ENCODE measurements at regions of chr5 and their contacts with region 1.

Region 1: GRCh38 chr5:74865804-74866595 is at the start of gene FAM169A:
- DNase-seq: peak in 33 of 35 experiments; percentile 20 to 71 (median 47)
- ATAC-seq: peak; percentile 77 to 83 (median 80)
- H3K4me3 ChIP-seq: peak within 1 kb of the TSS; percentile 69 to 90
- H3K4me3 Mint-ChIP-seq: peak within 1 kb of the TSS; percentile 91 to 96 (median 93)
- H3K27ac ChIP-seq: peak within 1 kb of the TSS; percentile 53
- H3K27ac Mint-ChIP-seq: peak within 1 kb of the TSS; percentile 86
- H3K4me1 ChIP-seq: peaks cover 2 to 16% of the 10 kb centered on the region in 2 experiments
- H3K4me1 Mint-ChIP-seq: peaks cover 40 to 43% (median 41%) of the 10 kb centered on the region in 3 donors
- H3K27me3 ChIP-seq: peaks cover 0 to 14% of the 10 kb centered on the region in 2 experiments
- H3K27me3 Mint-ChIP-seq: peaks cover 0 to 13% of the 10 kb centered on the region in 2 donors
- total RNA-seq, gene FAM169A: 12.5 to 15.9 (median 12.6) TPM

Region 2: GRCh38 chr5:74810915-74811314 is 55.1 kb before region 1 on chr5:
- CTCF ChIA-PET with region 1: no interaction called
- POLR2A ChIA-PET with region 1: interaction called in 1 of 2 experiments, 16 read pairs
- DNase-seq: no peak
- ATAC-seq: no peak
- H3K4me3 ChIP-seq: no peak overlapping the region
- H3K4me3 Mint-ChIP-seq: no peak overlapping the region
- H3K27ac ChIP-seq: no peak overlapping the region
- H3K27ac Mint-ChIP-seq: no peak overlapping the region
- H3K4me1 ChIP-seq: no peaks in the 10 kb centered on the region
- H3K4me1 Mint-ChIP-seq: no peaks in the 10 kb centered on the region
- H3K27me3 ChIP-seq: no peaks in the 10 kb centered on the region
- H3K27me3 Mint-ChIP-seq: no peaks in the 10 kb centered on the region

Region 3: DNA sequence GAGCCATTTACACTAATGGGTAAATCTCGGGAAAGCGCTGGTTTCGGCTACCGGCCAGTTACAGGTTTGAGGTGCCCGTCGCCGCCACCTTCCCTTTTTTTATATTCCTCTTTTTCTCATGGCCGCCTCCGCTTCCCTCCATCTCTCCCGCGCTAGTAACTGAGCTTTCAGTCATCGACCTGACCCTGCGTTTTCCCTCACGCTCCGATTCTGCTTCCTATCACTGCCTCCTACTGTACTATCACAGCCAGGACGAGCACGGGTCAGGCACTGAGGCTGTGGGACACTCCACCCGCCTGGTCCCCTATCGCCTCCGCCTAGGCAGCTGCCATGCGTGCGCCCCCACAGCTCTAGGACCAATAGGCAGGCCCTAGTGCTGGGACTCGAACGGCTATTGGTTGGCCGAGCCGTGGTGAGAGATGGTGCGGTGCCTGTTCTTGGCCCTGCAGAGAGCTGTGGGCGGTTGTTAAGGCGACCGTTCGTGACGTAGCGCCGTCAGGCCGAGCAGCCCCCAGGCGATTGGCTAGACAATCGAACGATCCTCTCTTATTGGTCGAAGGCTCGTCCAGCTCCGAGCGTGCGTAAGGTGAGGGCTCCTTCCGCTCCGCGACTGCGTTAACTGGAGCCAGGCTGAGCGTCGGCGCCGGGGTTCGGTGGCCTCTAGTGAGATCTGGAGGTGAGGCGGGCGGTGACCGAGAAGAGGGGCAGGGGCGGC is 470.8 kb after region 1 on chr5 and contains the start of gene HMGCR:
- CTCF ChIA-PET with region 1: no interaction called
- POLR2A ChIA-PET with region 1: interaction called in 1 of 2 experiments, 10 read pairs
- DNase-seq: peak; percentile 86 to 99 (median 96)
- ATAC-seq: peak; percentile 94 to 97 (median 96)
- H3K4me3 ChIP-seq: peak within 1 kb of the TSS; percentile 80 to 97
- H3K4me3 Mint-ChIP-seq: no peak within 1 kb of the TSS
- H3K27ac ChIP-seq: peak within 1 kb of the TSS; percentile 83
- H3K27ac Mint-ChIP-seq: peak within 1 kb of the TSS in 1 of 2 donors; percentile 74
- H3K4me1 ChIP-seq: peaks cover 14 to 15% of the 10 kb centered on the region in 2 experiments
- H3K4me1 Mint-ChIP-seq: peaks cover 35 to 36% (median 36%) of the 10 kb centered on the region in 3 donors
- H3K27me3 ChIP-seq: no peaks in the 10 kb centered on the region
- H3K27me3 Mint-ChIP-seq: no peaks in the 10 kb centered on the region
- total RNA-seq, gene HMGCR: 29.6 to 47.2 (median 41.6) TPM

Region 4: GRCh38 chr5:76513486-76513885 is 1647.5 kb after region 1 on chr5:
- CTCF ChIA-PET with region 1: no interaction called
- POLR2A ChIA-PET with region 1: no interaction called
- DNase-seq: no peak
- ATAC-seq: no peak
- H3K4me3 ChIP-seq: no peak overlapping the region
- H3K4me3 Mint-ChIP-seq: no peak overlapping the region
- H3K27ac ChIP-seq: no peak overlapping the region
- H3K27ac Mint-ChIP-seq: no peak overlapping the region
- H3K4me1 ChIP-seq: no peaks in the 10 kb centered on the region
- H3K4me1 Mint-ChIP-seq: peaks cover 33 to 37% (median 34%) of the 10 kb centered on the region in 3 donors
- H3K27me3 ChIP-seq: no peaks in the 10 kb centered on the region
- H3K27me3 Mint-ChIP-seq: no peaks in the 10 kb centered on the region